Endothelial cell of umbilical vein (primary cell): ENCODE measurements at regions of chr14 and their contacts with region 1.

Region 1: GRCh38 chr14:23076785-23077408 is 18.0 kb downstream of the ACIN1 start:
- DNase-seq: peak; percentile 49
- H3K4me3 ChIP-seq: no peak overlapping the region
- H3K27ac ChIP-seq: no peak overlapping the region
- H3K4me1 ChIP-seq: peaks cover 27% of the 10 kb centered on the region
- H3K27me3 ChIP-seq: no peaks in the 10 kb centered on the region
- CTCF ChIP-seq: peak; percentile 46 to 53
- POLR2A ChIP-seq: no peak

Region 2: DNA sequence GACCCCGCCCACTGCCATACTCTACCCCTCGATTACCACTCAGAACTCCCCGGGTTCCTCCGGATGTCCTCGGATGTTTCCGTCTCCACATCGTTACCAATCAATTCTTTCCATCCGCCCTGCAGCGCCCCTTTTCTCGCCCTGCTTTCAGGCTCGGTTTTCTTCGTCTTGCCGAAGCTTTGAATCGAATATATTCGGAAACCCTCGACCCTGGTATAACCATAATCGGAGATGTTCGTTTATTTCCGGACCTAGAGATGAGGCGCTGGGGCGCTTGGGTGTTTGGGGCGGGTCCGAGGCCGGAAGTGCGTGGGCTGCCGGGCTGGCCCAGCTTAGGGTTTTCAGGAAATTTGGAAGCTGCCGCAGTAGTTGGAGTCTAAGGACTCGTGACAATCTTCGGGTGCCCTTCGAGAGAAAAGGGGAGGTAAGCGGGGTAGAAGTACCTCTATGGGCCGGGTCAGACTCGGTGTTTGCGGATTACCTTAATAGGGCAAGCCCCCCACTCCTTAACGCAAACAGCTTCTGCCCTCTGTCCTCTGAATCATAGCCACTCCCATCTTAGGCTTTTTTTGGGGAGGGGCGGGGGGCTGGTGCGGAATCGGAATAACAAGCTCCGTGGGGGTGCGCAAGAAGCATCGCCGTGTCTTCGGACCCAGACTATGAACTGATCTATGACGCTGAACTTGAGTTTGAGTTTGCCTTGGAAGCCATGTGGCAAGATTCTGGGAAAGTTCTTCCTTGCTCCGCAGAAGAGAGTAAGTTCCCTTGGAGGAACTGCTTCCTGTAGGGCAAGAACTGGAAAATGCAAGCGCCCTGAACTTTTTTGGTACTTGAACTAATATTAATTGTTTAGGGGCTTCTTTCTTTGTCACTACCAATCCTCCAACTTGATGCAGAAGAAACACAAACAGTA is 18.6 kb after region 1 on chr14 and contains the start of gene C14orf119:
- CTCF ChIA-PET with region 1: interaction called, 66 read pairs
- POLR2A ChIA-PET with region 1: interaction called, 12 read pairs
- dilution Hi-C with region 1: no loop called
- intact Hi-C with region 1: loop called (anchors 2 kb)
- DNase-seq: peak; percentile 100
- H3K4me3 ChIP-seq: peak within 1 kb of the TSS; percentile 87 to 99 (median 94)
- H3K27ac ChIP-seq: peak within 1 kb of the TSS; percentile 89
- H3K4me1 ChIP-seq: peaks cover 28% of the 10 kb centered on the region
- H3K27me3 ChIP-seq: no peaks in the 10 kb centered on the region
- CTCF ChIP-seq: no peak
- POLR2A ChIP-seq: peak; percentile 66
- total RNA-seq, gene C14orf119: 55.5 and 58.3 TPM in 2 replicates

Region 3: DNA sequence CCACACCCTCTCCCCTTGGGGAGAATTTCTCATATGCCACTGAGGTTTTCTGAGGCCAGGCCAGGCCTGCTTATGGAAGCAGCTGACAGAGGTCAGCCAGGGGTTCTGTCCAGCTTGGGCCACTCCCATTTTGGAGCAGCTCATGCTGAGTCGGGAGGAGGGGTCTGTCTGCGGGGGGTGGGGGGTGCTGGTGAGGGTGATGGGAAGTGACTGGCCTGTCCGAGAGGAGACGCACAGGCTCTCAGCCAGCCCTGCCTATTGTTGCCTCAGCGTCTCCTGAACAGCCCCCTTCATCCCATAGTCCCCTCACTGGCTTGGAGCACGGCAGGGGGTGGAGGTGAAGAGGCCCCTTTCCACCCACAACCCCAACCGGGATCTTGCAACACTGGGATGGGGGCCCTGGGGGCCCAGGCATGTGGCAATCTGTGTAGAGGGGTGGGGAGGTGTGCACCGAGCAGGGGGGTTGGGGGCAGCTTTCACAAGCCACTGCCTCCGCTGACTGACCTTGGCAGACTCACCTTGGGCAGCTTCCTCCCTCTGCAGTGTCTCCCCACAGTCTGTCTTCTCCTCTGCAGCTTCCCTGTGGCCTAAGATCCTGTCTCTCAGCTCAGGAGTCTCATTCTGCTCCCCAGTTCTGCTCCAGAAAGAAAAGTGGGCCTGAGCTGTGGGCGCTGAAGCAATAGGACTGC is 36.7 kb after region 1 on chr14:
- CTCF ChIA-PET with region 1: interaction called, 88 read pairs
- POLR2A ChIA-PET with region 1: interaction called, 3 read pairs
- dilution Hi-C with region 1: no loop called
- intact Hi-C with region 1: loop called (anchors 1 kb)
- DNase-seq: no peak
- H3K4me3 ChIP-seq: no peak overlapping the region
- H3K27ac ChIP-seq: no peak overlapping the region
- H3K4me1 ChIP-seq: peaks cover 13% of the 10 kb centered on the region
- H3K27me3 ChIP-seq: peaks cover 9 to 10% of the 10 kb centered on the region in 2 experiments
- CTCF ChIP-seq: no peak
- POLR2A ChIP-seq: no peak